RWPE1 (cell line): ENCODE measurements at regions of chr20 and their contacts with region 1.

Region 1: GRCh38 chr20:38460040-38460623 is 12.5 kb upstream of the RALGAPB start:
- DNase-seq: peak; percentile 94
- H3K27ac ChIP-seq: peak overlapping the region; percentile 29; the same call in 1 of the 2 replicates
- CTCF ChIP-seq: no peak

Region 2: DNA sequence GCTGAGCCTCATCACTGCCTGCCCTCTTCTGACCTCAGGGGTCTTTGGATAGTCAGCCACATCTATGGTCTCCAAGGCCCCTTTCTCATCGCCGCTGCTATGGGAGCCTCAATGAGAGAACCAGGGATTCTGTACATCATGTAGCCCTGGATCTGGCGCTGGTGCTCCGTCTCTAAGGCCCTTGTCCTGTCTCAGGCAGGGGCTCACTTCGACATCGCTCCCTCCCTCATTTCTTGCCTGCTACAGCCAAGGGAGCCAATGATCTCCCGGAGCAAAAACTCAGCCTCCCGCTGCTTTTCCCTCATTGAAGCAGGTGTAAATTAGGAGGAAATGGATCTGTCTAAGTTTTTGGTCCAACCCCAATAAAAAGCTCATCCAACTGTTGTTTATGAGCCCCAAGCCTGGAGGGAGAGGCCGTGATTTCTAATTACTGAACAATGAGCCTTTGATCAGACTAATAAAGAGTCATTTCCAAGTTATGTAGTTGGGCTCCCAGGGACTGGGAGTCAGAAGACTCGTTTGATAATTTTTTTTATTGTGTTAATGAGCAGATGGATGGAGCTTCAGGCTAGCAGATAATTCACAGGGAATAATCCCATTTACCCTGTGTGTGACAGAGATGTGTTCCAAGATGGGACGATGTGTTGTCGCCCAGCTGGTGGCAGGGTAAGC is 83.0 kb before region 1 on chr20:
- CTCF ChIA-PET with region 1: no interaction called
- POLR2A ChIA-PET with region 1: no interaction called
- DNase-seq: no peak
- H3K27ac ChIP-seq: no peak overlapping the region
- CTCF ChIP-seq: no peak

Region 3: DNA sequence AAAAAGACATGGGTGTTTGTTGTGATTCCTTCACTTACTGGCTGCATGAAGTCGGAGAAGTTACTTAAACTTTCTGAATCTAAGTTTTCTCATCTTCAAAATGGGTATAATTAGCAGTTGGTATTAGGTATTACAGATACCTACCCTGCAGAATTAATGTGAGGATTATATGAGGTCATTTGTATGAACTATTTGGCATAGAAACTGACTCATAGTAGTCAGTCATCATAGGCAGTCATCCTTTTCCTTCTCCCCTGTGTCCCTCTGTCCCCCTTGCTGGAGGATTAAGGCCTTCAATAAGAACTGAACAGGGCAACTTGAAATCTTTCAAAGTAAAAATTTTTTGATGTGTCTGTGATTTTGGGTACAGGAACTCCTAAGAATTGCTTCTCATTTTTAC is 38.8 kb after region 1 on chr20:
- CTCF ChIA-PET with region 1: no interaction called
- POLR2A ChIA-PET with region 1: interaction called, 10 read pairs
- DNase-seq: peak; percentile 27
- H3K27ac ChIP-seq: no peak overlapping the region
- CTCF ChIP-seq: no peak

Region 4: DNA sequence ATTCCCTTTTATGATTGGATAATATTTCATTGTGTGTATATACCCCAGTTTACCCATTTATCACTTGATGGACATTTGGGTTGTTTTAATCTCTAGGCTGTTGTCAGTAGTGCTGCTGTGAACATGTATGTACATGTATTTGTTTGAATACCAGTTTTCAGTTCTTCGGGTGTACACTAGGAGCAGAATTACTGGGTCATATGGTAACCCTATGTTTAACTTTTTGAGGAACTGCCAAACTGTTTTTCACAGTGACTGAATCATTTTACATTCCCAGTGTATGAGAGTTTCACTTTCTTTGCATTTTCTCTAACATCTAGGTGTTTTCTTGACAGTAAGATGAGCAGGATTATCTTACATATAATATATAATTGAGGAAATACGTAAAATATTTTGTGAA is 76.2 kb after region 1 on chr20:
- CTCF ChIA-PET with region 1: no interaction called
- POLR2A ChIA-PET with region 1: no interaction called
- DNase-seq: peak; percentile 67
- H3K27ac ChIP-seq: no peak overlapping the region
- CTCF ChIP-seq: no peak

Region 5: GRCh38 chr20:38635721-38636288 is 175.7 kb after region 1 on chr20:
- CTCF ChIA-PET with region 1: no interaction called
- POLR2A ChIA-PET with region 1: no interaction called
- DNase-seq: peak; percentile 49
- H3K27ac ChIP-seq: no peak overlapping the region
- CTCF ChIP-seq: no peak

Region 6: GRCh38 chr20:39049684-39050554 is 589.8 kb after region 1 on chr20:
- CTCF ChIA-PET with region 1: no interaction called
- POLR2A ChIA-PET with region 1: no interaction called
- DNase-seq: peak; percentile 74
- H3K27ac ChIP-seq: peak overlapping the region; percentile 45
- CTCF ChIP-seq: peak; percentile 100